IMR-90 (cell line): ENCODE measurements at regions of chr4 and their contacts with region 1.

Region 1: GRCh38 chr4:92461732-92462131 is 158.0 kb downstream of the GRID2 start:
- DNase-seq: no peak
- ATAC-seq: no peak
- H3K4me3 ChIP-seq: no peak overlapping the region
- H3K27ac ChIP-seq: no peak overlapping the region
- H3K4me1 ChIP-seq: no peaks in the 10 kb centered on the region
- H3K27me3 ChIP-seq: no peaks in the 10 kb centered on the region
- CTCF ChIP-seq: no peak
- POLR2A ChIP-seq: no peak
- RAD21 ChIP-seq: no peak

Region 2: GRCh38 chr4:92488496-92488895 is 26.8 kb after region 1 on chr4:
- CTCF ChIA-PET with region 1: no interaction called
- POLR2A ChIA-PET with region 1: no interaction called
- dilution Hi-C with region 1: no loop called
- in situ Hi-C with region 1: no loop called
- intact Hi-C with region 1: loop called (anchors 1 kb)
- DNase-seq: no peak
- ATAC-seq: no peak
- H3K4me3 ChIP-seq: no peak overlapping the region
- H3K27ac ChIP-seq: no peak overlapping the region
- H3K4me1 ChIP-seq: no peaks in the 10 kb centered on the region
- H3K27me3 ChIP-seq: no peaks in the 10 kb centered on the region
- CTCF ChIP-seq: no peak
- POLR2A ChIP-seq: no peak
- RAD21 ChIP-seq: no peak